ENCODE measurements at regions of chr7 and their contacts with region 1.

Region 1: GRCh38 chr7:132580717-132581285 is 4.5 kb upstream of the PLXNA4 start:
- DNase-seq: peak; percentile 68
- ATAC-seq: peak; percentile 93
- H3K4me3 ChIP-seq: no peak overlapping the region
- H3K27ac ChIP-seq: no peak overlapping the region
- H3K4me1 ChIP-seq: no peaks in the 10 kb centered on the region
- H3K27me3 ChIP-seq: peaks cover 8 to 28% of the 10 kb centered on the region in 2 experiments
- CTCF ChIP-seq: peak; percentile 88
- EP300 ChIP-seq: no peak
- POLR2A ChIP-seq: no peak
- RAD21 ChIP-seq: peak; percentile 65

Region 2: DNA sequence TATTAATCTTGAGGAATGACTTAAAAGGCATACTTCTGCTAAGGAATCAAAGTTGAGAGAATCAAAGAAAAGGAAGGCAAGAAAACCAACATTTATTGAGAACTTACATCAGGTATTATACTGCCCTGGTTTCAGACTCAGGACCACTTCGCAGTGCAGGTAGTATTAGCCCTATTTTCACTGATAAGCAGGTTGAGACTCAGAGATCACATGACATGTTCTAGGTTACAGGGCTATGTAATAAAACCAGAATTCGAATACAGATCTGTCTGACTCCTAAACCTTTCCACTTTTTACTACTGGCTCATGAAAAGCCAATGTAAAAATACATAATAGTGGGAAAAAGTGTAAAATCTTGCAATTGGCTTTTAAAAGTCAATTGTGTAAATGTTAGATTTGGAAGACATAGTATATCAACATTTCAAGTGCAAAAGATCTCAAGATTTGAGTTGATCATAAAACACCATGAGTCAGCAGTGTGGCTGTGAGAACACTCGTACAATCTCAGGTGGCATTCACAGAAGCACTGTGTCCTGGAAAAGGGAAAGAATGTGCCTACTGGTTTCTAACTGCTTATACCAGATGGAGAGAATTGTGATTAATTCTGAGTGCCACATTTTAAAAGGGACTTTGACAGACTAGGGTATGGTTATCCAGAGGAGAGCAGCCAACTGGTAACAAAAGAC is 1448.9 kb before region 1 on chr7:
- CTCF ChIA-PET with region 1: no interaction called
- POLR2A ChIA-PET with region 1: no interaction called
- in situ Hi-C with region 1: no loop called
- intact Hi-C with region 1: no loop called
- DNase-seq: no peak
- ATAC-seq: no peak
- H3K4me3 ChIP-seq: no peak overlapping the region
- H3K27ac ChIP-seq: no peak overlapping the region
- H3K4me1 ChIP-seq: no peaks in the 10 kb centered on the region
- H3K27me3 ChIP-seq: peaks cover 0 to 25% of the 10 kb centered on the region in 2 experiments; a peak in 2 of 5 replicates
- CTCF ChIP-seq: no peak
- EP300 ChIP-seq: no peak
- POLR2A ChIP-seq: no peak
- RAD21 ChIP-seq: no peak

Region 3: DNA sequence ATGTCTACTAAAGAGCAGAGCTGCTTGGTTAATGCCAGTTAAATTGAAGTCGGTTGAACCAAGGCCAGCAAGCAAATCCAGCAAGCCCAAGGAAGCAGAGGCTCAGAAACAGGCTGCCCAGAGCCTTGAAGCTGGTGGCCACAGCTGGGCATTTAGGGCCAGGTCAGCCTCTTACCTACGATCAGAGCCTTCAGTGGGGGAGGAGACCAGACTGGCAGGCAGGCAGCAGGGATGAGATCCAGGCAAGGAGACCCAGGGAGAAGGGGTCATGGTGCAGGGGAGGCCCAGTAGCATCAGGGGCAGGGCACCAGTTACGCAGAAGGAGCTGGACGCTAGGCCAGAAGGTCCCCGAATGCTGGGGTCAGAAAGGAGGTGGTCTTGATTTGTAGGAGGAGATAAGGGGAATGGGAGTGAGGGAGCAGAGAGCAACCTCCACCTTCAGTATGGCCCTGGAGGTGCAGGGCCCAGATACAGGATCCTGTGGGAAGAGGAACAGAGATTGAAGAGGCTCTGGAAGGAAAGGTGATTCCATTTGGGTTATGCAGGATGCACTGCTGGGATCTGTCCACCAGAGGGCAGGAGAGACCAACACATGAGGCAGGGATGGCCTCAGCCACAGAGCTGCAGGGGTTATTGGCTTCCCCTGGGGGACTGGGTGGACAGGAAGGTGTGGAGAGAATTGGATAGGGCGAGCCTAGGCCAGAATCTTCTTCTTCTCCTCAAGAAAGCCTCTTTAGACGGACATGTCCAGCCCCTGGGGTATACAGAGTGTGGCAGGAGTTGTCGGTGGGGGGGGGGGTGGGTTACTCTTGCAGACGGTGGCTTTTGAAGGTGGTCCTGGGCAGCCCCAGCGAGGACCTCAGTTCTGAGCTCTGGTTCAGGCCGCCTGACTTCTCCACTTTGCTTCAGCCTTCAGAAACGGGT is 891.8 kb before region 1 on chr7:
- CTCF ChIA-PET with region 1: no interaction called
- POLR2A ChIA-PET with region 1: no interaction called
- in situ Hi-C with region 1: loop called (anchors 10 kb)
- intact Hi-C with region 1: loop called (anchors 5 kb)
- DNase-seq: peak; percentile 49
- ATAC-seq: peak; percentile 84
- H3K4me3 ChIP-seq: no peak overlapping the region
- H3K27ac ChIP-seq: no peak overlapping the region
- H3K4me1 ChIP-seq: no peaks in the 10 kb centered on the region
- H3K27me3 ChIP-seq: peaks cover 2 to 38% of the 10 kb centered on the region in 2 experiments; a peak in 3 of 5 replicates
- CTCF ChIP-seq: peak; percentile 92
- EP300 ChIP-seq: no peak
- POLR2A ChIP-seq: no peak
- RAD21 ChIP-seq: peak; percentile 73

Region 4: GRCh38 chr7:131945313-131945911 is 635.4 kb before region 1 on chr7:
- CTCF ChIA-PET with region 1: interaction called, 7 read pairs
- POLR2A ChIA-PET with region 1: no interaction called
- in situ Hi-C with region 1: loop called (anchors 5 kb)
- intact Hi-C with region 1: no loop called
- DNase-seq: peak; percentile 9
- ATAC-seq: peak; percentile 92
- H3K4me3 ChIP-seq: 0 out of 6 replicates have a peak overlapping the region, but pooled peaks of 1 of the 3 experiments have one; percentile 10
- H3K27ac ChIP-seq: no peak overlapping the region
- H3K4me1 ChIP-seq: peaks cover 31% of the 10 kb centered on the region
- H3K27me3 ChIP-seq: peaks cover 4 to 41% of the 10 kb centered on the region in 2 experiments; a peak in 4 of 5 replicates
- CTCF ChIP-seq: peak; percentile 91
- EP300 ChIP-seq: no peak
- POLR2A ChIP-seq: no peak
- RAD21 ChIP-seq: peak; percentile 93

Region 5: DNA sequence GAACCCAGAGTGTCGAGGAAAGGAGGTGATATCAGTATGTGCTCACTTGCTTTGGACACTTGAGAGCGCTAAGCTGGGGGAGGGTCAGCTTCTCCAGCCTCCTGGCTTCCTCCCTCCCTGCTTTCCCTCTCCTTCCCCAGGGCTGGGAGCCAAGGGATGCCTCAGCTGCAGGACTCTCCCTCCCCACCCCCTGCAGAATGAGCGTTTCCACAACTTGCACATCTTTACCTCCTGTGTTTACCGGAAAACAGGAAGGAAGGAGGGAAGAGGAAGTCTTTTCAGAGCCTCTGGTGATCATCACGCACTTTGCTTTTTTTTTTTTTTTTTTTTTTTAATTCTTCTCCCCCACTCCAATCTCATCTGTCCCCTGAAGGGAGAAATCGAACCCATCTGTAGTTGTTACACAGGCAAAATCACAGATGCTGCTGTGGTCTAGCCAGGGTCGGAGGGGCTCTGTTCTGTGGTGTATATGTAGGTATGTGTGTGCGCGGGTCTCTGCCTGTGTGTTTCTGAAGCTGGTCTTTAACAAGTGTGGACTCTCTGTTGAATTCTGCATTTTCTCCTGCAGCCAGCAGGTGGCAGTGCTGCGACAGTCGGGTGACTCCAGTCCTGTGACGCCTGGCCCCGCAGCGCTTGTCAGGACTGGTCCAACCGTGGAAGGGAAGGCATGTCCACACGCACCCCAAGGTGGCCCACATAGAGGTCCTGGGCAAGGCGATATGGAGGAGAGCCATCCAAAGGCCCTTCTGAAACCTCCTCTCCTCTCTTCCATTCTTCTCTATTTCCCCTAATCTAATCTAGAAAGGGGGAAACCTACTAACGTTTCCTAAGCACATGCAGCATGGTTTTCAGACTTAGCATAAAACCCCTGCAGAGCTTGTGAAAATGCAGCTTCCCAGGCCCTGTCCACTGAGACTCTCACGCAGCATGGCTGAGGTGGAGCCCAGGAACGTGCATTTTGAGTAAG is 262.2 kb before region 1 on chr7:
- CTCF ChIA-PET with region 1: interaction called, 21 read pairs
- POLR2A ChIA-PET with region 1: no interaction called
- in situ Hi-C with region 1: no loop called
- intact Hi-C with region 1: no loop called
- DNase-seq: peak; percentile 65
- ATAC-seq: peak; percentile 98
- H3K4me3 ChIP-seq: no peak overlapping the region
- H3K27ac ChIP-seq: no peak overlapping the region
- H3K4me1 ChIP-seq: 0 out of 2 replicates have a peak, but pooled peaks cover 6% of the 10 kb centered on the region
- H3K27me3 ChIP-seq: peaks cover 0 to 28% of the 10 kb centered on the region in 2 experiments; a peak in 3 of 5 replicates
- CTCF ChIP-seq: peak; percentile 90
- EP300 ChIP-seq: no peak
- POLR2A ChIP-seq: no peak
- RAD21 ChIP-seq: peak; percentile 76

Region 6: DNA sequence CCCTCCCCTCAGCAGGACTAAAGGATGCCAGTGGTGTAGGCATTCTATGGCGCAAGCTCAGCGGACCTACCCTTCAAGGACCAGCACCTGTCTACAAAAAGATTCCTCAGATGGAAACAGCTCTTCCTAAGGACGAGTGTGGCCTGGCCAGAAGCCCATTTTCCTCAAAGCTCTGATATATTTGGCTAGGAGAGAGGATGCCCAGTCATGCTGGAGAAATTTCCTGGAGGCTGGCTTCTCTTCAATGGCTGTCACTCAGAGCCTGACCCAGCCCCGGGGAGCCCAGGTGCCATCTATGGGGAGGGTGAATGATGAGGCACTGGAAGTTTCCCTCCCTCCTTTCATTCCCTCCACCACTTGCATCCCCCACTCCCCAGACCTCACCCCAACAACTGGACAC is 116.1 kb before region 1 on chr7:
- CTCF ChIA-PET with region 1: no interaction called
- POLR2A ChIA-PET with region 1: no interaction called
- in situ Hi-C with region 1: no loop called
- intact Hi-C with region 1: no loop called
- DNase-seq: no peak
- ATAC-seq: no peak
- H3K4me3 ChIP-seq: no peak overlapping the region
- H3K27ac ChIP-seq: no peak overlapping the region
- H3K4me1 ChIP-seq: no peaks in the 10 kb centered on the region
- H3K27me3 ChIP-seq: peaks cover 1 to 15% of the 10 kb centered on the region in 2 experiments; a peak in 1 of 5 replicates
- CTCF ChIP-seq: no peak
- EP300 ChIP-seq: no peak
- POLR2A ChIP-seq: no peak
- RAD21 ChIP-seq: no peak